ENCODE measurements at regions of chr21 and their contacts with region 1.

Region 1: GRCh38 chr21:31866077-31866511 is 6.7 kb upstream of the HUNK start:
- DNase-seq: peak; percentile 33 to 54 (median 52)
- H3K4me3 ChIP-seq: no peak overlapping the region
- H3K4me3 Mint-ChIP-seq: no peak overlapping the region
- H3K27ac ChIP-seq: no peak overlapping the region
- H3K27ac Mint-ChIP-seq: no peak overlapping the region
- H3K4me1 ChIP-seq: no peaks in the 10 kb centered on the region
- H3K4me1 Mint-ChIP-seq: no peaks in the 10 kb centered on the region
- H3K27me3 ChIP-seq: peaks cover 15 to 20% of the 10 kb centered on the region in 2 donors
- H3K27me3 Mint-ChIP-seq: peaks cover 17 to 22% (median 19%) of the 10 kb centered on the region in 3 donors
- CTCF ChIP-seq: peak; percentile 89

Region 2: GRCh38 chr21:31900121-31900895 is 34.2 kb after region 1 on chr21:
- intact Hi-C with region 1: no loop called
- DNase-seq: no peak
- H3K4me3 ChIP-seq: no peak overlapping the region
- H3K4me3 Mint-ChIP-seq: no peak overlapping the region
- H3K27ac ChIP-seq: no peak overlapping the region
- H3K27ac Mint-ChIP-seq: peak overlapping the region in 1 of 7 donors; percentile 51
- H3K4me1 ChIP-seq: no peaks in the 10 kb centered on the region
- H3K4me1 Mint-ChIP-seq: no peaks in the 10 kb centered on the region
- H3K27me3 ChIP-seq: no peaks in the 10 kb centered on the region
- H3K27me3 Mint-ChIP-seq: peaks cover 4 to 10% (median 4%) of the 10 kb centered on the region in 3 donors
- CTCF ChIP-seq: no peak

Region 3: GRCh38 chr21:32257962-32258785 is 392.1 kb after region 1 on chr21:
- intact Hi-C with region 1: loop called (anchors 5 to 10 kb)
- DNase-seq: peak in 1 of 3 donors; percentile 14
- H3K4me3 ChIP-seq: no peak overlapping the region
- H3K4me3 Mint-ChIP-seq: no peak overlapping the region
- H3K27ac ChIP-seq: no peak overlapping the region
- H3K27ac Mint-ChIP-seq: no peak overlapping the region
- H3K4me1 ChIP-seq: no peaks in the 10 kb centered on the region
- H3K4me1 Mint-ChIP-seq: peaks cover 9% of the 10 kb centered on the region
- H3K27me3 ChIP-seq: no peaks in the 10 kb centered on the region
- H3K27me3 Mint-ChIP-seq: peaks cover 2 to 6% (median 4%) of the 10 kb centered on the region in 3 donors
- CTCF ChIP-seq: peak; percentile 52

Region 4: DNA sequence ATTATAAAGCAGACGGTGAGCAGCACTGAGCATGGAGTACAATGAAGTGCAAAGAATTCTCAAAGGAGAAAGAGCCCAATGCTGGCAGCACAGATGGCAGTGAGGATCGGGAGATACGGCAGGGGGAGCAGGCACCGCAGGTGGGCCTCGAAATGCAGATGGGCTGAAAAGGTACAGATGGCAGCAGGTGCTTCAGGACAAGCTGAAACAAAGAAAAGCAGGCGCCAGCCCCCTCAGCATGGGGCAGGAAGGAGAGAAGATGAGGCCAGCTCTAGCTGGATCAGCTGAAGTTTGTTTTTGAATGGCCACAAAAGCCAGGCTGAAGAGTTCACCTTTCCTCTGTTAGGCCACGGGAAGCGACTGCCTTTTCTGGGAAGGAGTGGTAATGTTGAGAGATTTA is 738.4 kb after region 1 on chr21:
- intact Hi-C with region 1: loop called in 1 of 2 experiments (anchors 10 kb)
- DNase-seq: no peak
- H3K4me3 ChIP-seq: no peak overlapping the region
- H3K4me3 Mint-ChIP-seq: no peak overlapping the region
- H3K27ac ChIP-seq: no peak overlapping the region
- H3K27ac Mint-ChIP-seq: peak overlapping the region in 2 of 7 donors; percentile 2 to 17
- H3K4me1 ChIP-seq: no peaks in the 10 kb centered on the region
- H3K4me1 Mint-ChIP-seq: no peaks in the 10 kb centered on the region
- H3K27me3 ChIP-seq: no peaks in the 10 kb centered on the region
- H3K27me3 Mint-ChIP-seq: no peaks in the 10 kb centered on the region
- CTCF ChIP-seq: no peak

Region 5: DNA sequence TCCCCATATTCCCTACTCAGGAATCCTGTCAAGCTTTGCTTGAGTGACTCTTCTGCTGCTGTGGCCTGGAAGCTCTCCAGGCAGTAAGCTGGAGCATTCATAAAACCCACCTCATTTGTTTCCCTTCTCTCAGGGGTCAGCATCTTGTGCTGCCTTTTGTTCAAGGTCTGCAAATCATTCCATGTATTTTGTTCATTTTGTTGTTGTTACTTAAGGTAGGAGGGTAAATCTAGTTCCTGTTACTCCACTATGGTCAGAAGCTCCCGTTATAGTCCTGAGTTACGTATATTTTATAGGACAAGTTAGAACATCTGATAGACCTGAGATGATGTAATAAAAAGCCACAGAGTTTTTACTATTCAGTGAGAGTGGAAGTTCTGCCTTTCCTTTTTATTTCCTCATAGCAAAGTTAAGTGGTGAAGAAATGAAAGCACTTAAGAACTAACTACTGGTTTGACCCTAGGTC is 851.8 kb after region 1 on chr21:
- intact Hi-C with region 1: no loop called
- DNase-seq: peak; percentile 29 to 65 (median 45)
- H3K4me3 ChIP-seq: peak overlapping the region in 1 of 3 experiments; percentile 36
- H3K4me3 Mint-ChIP-seq: peak overlapping the region in 1 of 2 donors; percentile 43
- H3K27ac ChIP-seq: peak overlapping the region; percentile 46 to 72
- H3K27ac Mint-ChIP-seq: peak overlapping the region; percentile 44 to 93 (median 90)
- H3K4me1 ChIP-seq: peaks cover 11 to 18% of the 10 kb centered on the region in 2 donors
- H3K4me1 Mint-ChIP-seq: peaks cover 23% of the 10 kb centered on the region
- H3K27me3 ChIP-seq: no peaks in the 10 kb centered on the region
- H3K27me3 Mint-ChIP-seq: no peaks in the 10 kb centered on the region
- CTCF ChIP-seq: no peak